GM13976 (cell line): ENCODE measurements at regions of chr18 and their contacts with region 1.

Region 1: DNA sequence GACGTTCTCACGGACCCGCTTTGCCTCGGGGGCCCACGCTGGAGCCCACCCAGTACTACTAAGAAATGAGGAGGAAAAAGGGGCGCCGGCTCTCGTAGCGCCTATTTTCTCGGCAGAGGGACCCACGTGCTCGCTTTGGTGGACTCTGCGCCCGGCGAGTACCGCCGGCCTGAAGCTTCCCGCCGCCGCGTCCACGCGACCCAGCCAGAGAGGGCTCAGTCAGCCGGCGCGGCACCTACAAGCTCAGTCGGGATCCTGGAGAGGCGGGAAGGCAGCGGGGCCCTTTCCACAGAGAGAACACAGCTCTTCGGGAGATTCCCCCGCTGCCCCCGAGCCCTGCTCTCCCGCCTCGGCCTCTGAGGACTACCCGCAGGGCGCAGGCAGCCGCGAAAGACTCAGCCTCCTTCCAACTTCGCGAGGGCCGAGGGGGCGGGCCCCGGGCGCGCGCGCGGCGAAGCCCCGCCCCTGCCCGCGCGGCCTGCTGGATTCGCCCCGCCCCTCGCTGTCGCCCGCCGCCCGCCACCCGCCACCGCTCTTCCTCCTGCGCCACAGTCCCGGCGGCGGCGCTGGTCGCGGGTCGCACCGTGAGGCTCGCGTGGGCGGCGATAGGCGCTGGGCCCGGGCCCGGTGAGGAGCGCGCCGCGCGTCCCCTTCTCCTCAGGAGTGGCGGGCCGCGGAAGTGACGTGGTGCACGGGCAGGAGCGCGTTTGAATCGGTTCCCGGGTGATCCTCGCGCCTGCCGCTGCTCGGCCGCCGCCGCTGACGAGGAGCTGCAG is at the start of gene SMCHD1:
- DNase-seq: peak; percentile 92
- CTCF ChIP-seq: no peak

Region 2: GRCh38 chr18:812376-813171 is 1842.8 kb before region 1 on chr18:
- in situ Hi-C with region 1: loop called (anchors 25 kb)
- DNase-seq: peak; percentile 92
- CTCF ChIP-seq: no peak